Posterior cingulate gyrus (tissue), 11 donors: ENCODE measurements at regions of chr9 and their contacts with region 1.

Region 1: DNA sequence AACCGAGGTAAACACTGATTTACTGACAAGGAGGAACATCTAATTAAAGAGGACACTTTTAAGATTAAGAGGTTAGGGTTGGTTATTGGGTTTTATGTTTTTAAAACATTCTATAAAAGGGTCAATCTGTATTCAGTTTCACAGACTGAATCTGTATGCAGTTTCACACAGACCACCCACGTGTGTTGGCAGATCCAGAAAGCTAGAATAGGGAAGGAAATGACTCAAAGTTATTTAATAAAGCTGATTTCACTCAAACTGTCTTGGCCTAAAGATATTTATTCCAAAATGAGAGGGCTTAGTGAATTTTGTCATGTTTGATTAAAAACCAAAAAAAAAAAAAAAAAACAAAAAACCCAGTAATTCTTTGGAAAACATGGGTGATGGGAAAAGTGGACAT is 140.2 kb downstream of the SLC24A2 start:
- DNase-seq: peak in 1 of 10 donors; percentile 24

Region 2: DNA sequence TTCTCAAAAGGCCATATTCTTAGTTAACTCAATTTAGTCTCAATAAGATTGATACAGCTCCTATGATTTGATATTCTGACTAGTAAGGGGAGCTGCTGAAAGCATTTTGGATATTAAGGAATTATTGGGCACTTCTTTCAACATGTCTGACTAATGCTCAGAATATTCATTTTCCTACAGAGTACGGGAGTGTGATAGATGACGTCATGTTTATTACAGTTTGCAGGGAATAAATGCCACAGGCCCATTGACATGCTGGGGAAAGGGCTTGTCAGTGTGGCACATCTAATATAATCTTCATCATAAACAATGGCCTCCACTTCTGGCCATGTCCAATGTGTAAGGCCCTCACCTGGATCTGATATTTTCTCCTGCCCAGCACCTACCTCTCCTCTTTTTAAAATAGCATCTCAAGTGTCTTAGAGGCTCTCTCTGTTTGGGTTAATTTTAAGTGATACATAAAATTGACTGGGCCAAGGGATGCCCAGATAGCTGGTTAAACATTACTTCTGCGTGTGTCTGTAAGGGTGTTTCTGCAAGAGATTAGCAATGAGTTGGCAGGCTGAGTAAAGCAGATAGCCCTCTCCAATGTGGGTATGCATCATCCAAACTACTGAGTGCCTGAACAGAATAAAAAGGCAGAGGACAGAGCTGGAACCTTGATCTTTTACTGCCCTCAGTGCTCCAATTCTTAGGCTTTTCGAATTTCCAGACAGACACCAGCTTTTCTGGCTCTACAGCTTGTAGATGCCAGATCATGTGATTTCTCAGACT is 40.8 kb after region 1 on chr9:
- intact Hi-C with region 1: loop called (anchors 5 kb)
- DNase-seq: no peak

Region 3: DNA sequence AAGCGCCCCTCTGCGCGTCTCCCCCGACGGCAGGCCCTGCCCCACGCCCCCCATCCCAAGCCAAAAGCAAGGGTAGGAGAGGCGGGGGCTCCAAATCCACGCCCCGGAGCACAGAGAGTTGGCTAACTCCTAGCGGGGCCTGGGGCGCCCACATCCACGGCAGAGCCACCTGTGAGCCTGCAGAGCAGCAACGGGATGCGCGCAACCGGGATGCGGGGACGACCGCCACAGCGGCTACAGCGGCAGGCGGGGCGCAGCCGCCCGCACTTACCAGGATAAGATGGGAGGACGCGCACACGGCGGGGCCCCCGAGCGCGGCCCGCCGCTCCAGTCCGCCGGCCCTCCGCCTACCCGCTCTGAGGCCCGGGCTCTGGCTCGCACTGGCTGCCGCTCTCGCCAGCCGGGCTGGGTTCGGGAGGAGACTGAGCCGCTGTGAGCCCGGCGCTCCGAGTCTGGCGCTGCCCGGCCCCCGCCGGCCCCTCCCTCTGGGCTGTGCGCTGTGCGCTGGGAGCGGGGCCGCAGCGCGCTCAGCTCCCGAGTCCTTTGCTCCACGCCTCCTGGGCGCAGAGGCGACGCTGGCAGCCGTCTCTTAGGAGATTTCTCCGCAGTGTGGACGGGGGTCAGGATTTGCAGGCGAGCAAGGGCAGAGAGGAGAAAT is 140.1 kb after region 1 on chr9 and contains the start of gene SLC24A2:
- intact Hi-C with region 1: loop called (anchors 5 kb)
- DNase-seq: peak; percentile 53 to 96 (median 71)

Region 4: DNA sequence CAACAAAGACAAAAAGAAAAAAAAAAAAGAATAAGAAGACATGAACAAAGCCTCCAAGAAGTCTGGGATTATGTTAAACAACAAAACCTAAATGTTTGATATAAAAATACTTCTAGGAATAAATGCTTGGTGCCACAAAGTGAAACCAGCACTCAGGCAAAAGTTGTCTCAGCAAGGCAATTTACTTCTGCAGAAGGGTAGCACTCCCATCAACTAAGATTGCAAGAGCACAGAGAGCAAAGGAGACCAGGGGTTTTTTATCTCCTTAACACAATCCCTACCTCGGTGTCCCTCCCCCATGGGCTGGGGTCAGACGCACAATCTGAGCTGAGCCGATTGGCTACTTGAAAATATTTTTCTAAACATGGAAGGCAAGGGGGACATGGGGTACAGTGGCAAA is 521.5 kb after region 1 on chr9:
- intact Hi-C with region 1: no loop called
- DNase-seq: no peak